GM18951 (cell line): ENCODE measurements at regions of chr11 and their contacts with region 1.

Region 1: GRCh38 chr11:59106363-59107336 is at the start of gene FAM111B:
- POLR2A ChIP-seq: peak; percentile 76

Region 2: DNA sequence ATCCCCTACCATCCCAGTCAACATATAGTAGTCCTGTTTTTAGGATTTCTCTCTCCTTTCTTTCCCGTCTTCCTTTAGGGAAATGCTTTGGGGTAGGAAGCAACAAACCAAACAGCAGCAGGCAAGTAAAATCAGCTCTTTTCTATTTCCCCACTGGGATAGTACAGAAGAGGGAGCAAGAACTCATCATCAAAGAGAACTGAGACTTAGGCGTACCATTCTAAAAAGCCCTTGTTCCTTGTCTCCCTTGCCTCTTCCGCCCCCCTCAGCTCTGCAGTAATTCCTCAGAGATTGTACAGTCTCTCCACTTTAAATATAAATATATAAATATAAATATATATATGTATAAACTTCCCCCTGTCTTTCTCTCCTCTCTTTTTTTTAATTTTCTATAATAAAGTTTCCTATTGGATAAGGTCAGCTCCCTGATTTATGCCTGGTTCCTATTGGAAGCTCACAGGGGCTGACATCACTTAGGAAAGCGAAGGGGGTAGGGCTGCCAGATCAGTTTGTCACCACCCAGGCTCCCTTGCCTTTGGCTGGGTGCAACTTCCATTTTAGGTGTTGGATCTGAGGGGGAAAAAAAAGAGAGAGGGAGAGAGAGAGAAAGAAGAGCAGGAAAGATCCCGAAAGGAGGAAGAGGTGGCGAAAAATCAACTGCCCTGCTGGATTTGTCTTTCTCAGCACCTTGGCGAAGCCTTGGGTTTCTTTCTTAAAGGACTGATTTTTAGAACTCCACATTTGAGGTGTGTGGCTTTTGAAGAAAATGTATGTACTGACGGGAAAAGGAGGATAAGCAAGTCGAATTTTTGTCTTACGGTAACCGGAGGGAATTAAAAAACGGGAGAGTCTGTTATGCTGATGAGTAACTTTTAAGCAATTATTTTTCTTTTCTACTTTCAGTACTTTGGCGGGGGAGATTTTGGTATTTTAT is 1345.1 kb before region 1 on chr11 and contains the start of gene CTNND1:
- in situ Hi-C with region 1: loop called (anchors 25 kb)
- POLR2A ChIP-seq: peak; percentile 63

Region 3: DNA sequence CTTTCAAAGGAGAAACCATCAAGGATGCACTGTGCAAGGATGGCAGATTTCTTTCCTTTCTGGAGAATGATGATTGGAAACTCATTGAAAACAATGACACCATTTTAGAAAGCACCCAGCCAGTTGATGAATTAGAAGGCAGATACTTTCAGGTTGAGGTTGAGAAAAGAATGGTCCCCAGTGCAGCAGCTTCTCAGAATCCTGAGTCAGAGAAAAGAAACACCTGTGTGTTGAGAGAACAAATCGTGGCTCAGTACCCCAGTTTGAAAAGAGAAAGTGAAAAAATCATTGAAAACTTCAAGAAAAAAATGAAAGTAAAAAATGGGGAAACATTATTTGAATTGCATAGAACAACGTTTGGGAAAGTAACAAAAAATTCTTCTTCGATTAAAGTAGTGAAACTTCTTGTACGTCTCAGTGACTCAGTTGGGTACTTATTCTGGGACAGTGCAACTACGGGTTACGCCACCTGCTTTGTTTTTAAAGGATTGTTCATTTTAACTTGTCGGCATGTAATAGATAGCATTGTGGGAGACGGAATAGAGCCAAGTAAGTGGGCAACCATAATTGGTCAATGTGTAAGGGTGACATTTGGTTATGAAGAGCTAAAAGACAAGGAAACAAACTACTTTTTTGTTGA is 45.8 kb after region 1 on chr11:
- in situ Hi-C with region 1: no loop called
- POLR2A ChIP-seq: no peak